ENCODE measurements at regions of chr1 and their contacts with region 1.

Region 1: GRCh38 chr1:203906932-203907331 is 45.5 kb downstream of the SNRPE start:
- DNase-seq: no peak
- H3K4me3 ChIP-seq: no peak overlapping the region
- H3K27ac ChIP-seq: no peak overlapping the region
- H3K4me1 ChIP-seq: peaks cover 0 to 5% (median 0%) of the 10 kb centered on the region in 4 donors
- H3K27me3 ChIP-seq: no peaks in the 10 kb centered on the region
- CTCF ChIP-seq: no peak
- EP300 ChIP-seq: no peak
- POLR2A ChIP-seq: no peak

Region 2: GRCh38 chr1:203351037-203352013 is 555.6 kb before region 1 on chr1 and contains the start of gene FMOD:
- intact Hi-C with region 1: no loop called
- DNase-seq: peak; percentile 93
- H3K4me3 ChIP-seq: peak within 1 kb of the TSS in 3 of 4 donors; percentile 29 to 38 (median 32)
- H3K27ac ChIP-seq: peak within 1 kb of the TSS; percentile 61 to 73 (median 64)
- H3K4me1 ChIP-seq: peaks cover 0 to 35% (median 26%) of the 10 kb centered on the region in 4 donors
- H3K27me3 ChIP-seq: no peaks in the 10 kb centered on the region
- CTCF ChIP-seq: no peak
- EP300 ChIP-seq: peak in 2 of 4 donors; percentile 34 to 71
- POLR2A ChIP-seq: no peak
- total RNA-seq, gene FMOD: 32.9 to 64.5 (median 40.4) TPM

Region 3: GRCh38 chr1:204065174-204065985 is 158.4 kb after region 1 on chr1:
- intact Hi-C with region 1: loop called (anchors 10 kb)
- DNase-seq: peak; percentile 76
- H3K4me3 ChIP-seq: peak overlapping the region in 1 of 4 donors; percentile 7
- H3K27ac ChIP-seq: no peak overlapping the region
- H3K4me1 ChIP-seq: peaks cover 0 to 12% (median 2%) of the 10 kb centered on the region in 4 donors
- H3K27me3 ChIP-seq: no peaks in the 10 kb centered on the region
- CTCF ChIP-seq: no peak
- EP300 ChIP-seq: no peak
- POLR2A ChIP-seq: no peak

Measured in sigmoid colon (tissue), 7 donors.